ENCODE measurements at regions of chr6 and their contacts with region 1.

Region 1: GRCh38 chr6:11732036-11732631 is 46.5 kb downstream of the ADTRP start:
- DNase-seq: peak; percentile 25
- H3K4me3 Mint-ChIP-seq: peak overlapping the region; percentile 23
- H3K27ac Mint-ChIP-seq: peak overlapping the region; percentile 87
- H3K4me1 Mint-ChIP-seq: peaks cover 71% of the 10 kb centered on the region
- H3K27me3 Mint-ChIP-seq: no peaks in the 10 kb centered on the region

Region 2: GRCh38 chr6:11785774-11786579 is 53.8 kb after region 1 on chr6:
- intact Hi-C with region 1: loop called (anchors 1 kb)
- DNase-seq: peak; percentile 64
- H3K4me3 Mint-ChIP-seq: peak overlapping the region; percentile 28
- H3K27ac Mint-ChIP-seq: peak overlapping the region; percentile 85
- H3K4me1 Mint-ChIP-seq: peaks cover 13% of the 10 kb centered on the region
- H3K27me3 Mint-ChIP-seq: no peaks in the 10 kb centered on the region

Region 3: GRCh38 chr6:11824986-11825385 is 92.9 kb after region 1 on chr6:
- intact Hi-C with region 1: loop called (anchors 2 kb)
- DNase-seq: peak; percentile 16
- H3K4me3 Mint-ChIP-seq: no peak overlapping the region
- H3K27ac Mint-ChIP-seq: peak overlapping the region; percentile 79
- H3K4me1 Mint-ChIP-seq: peaks cover 25% of the 10 kb centered on the region
- H3K27me3 Mint-ChIP-seq: peaks cover 1% of the 10 kb centered on the region

Region 4: DNA sequence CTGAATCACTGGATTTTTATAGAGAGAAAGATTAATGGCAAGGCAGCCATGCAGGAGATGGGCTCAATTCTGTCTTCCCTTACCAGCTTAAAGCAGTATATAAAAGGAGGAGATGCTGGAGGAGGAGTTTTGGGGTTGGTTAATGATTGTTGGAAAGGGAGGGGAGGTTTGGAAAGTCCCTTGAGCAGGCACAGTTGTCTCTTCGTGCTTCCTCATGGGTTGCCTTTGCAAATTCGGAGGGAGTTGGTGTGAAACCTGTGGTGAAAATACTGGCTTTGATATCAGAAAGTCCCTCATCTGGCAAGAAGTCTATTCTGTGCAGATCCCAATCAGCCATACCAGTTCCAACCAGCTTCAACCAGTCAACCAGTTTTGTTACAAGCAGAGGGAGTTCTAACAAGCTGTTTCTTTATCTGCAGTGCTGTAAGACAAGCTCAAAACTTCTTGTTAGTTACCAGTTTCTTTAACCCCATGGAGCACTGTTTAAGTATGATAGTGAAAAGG is 387.0 kb after region 1 on chr6:
- intact Hi-C with region 1: loop called (anchors 5 kb)
- DNase-seq: peak; percentile 77
- H3K4me3 Mint-ChIP-seq: peak overlapping the region; percentile 36
- H3K27ac Mint-ChIP-seq: peak overlapping the region; percentile 83
- H3K4me1 Mint-ChIP-seq: peaks cover 67% of the 10 kb centered on the region
- H3K27me3 Mint-ChIP-seq: no peaks in the 10 kb centered on the region

Measured in activated T-helper 1 cell treated with anti-CD3 and anti-CD28 coated beads, Interleukin-12 subunit alpha, Interleukin-12 subunit beta, Interleukin-2, Interleukin-4 antibody, amounts not matched to agents 30 ng/mL and 10 ng/mL and 1 ng/mL, durations not matched to agents 14 hours and 24 hours and 36 hours (primary cell).